A673 (cell line): ENCODE measurements at regions of chr2 and their contacts with region 1.

Region 1: DNA sequence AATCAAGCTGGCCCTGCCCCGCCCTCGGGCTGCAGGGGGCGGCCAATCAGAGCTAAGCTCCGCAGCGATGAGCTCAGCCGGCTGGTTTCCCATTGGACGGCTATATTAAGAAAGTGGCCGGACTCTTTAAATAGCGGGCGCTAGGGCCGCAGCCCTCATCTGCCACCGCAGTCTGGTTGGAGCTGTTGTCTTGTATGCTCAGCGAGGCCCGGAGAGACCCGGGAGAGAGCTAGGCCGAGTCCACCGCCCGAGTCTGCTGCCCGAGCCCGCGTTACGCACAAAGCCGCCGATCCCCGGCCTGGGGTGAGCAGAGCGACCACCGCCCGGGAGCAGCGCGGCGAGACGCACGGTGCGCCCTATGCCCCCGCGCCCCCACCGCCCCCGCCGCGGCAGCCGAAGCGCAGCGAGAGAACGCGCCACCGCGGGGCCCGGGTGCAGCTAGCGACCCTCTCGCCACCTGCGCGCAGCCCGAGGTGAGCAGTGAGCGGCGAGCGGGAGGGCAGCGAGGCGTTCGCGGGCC is at the start of gene RHOB:
- DNase-seq: peak; percentile 99
- H3K4me3 ChIP-seq: peak within 1 kb of the TSS; percentile 81
- H3K27ac ChIP-seq: peak within 1 kb of the TSS; percentile 94
- H3K4me1 ChIP-seq: peaks cover 15% of the 10 kb centered on the region
- H3K27me3 ChIP-seq: no peaks in the 10 kb centered on the region
- CTCF ChIP-seq: no peak
- total RNA-seq, gene RHOB: 24.1 and 31.5 TPM in 2 replicates

Region 2: DNA sequence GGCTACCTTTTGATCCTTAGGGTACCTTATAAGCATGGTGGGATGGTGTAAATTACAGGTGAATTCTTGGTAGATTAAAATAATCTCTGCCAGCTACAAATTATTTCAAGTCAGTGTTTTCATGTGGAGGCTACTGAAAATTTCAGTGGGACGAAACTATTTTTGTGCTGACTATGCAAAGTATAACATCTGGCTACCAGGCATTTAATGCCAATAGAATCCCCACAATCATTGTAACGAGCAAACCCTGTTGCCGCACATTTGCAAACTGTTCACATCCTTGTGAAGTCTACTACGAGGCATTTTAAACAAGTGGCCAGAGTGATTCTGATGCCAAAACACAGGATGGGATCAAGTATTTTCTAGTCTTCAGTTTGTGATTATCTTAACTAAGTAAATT is 173.9 kb before region 1 on chr2:
- CTCF ChIA-PET with region 1: no interaction called
- POLR2A ChIA-PET with region 1: no interaction called
- intact Hi-C with region 1: no loop called
- DNase-seq: no peak
- H3K4me3 ChIP-seq: no peak overlapping the region
- H3K27ac ChIP-seq: no peak overlapping the region
- H3K4me1 ChIP-seq: no peaks in the 10 kb centered on the region
- H3K27me3 ChIP-seq: no peaks in the 10 kb centered on the region
- CTCF ChIP-seq: no peak

Region 3: DNA sequence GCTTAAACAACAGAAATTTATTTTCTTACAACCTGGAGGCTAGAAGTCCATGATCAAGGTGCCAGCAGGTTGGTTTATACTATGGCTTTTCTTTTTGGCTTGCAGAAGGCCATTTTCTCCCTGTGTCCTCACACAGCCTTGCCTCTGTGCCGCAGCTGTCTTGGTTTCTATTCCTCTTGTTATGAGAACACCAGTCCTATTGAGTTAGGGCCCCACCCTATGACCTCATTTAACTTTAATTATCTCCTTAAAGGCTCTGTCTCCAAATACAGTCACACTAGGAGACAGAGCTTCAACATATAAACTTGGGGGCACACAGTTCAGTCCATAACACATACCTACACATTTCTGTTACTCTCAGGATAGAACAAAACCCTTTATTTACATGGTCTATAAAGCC is 17.4 kb before region 1 on chr2:
- CTCF ChIA-PET with region 1: no interaction called
- POLR2A ChIA-PET with region 1: no interaction called
- intact Hi-C with region 1: no loop called
- DNase-seq: no peak
- H3K4me3 ChIP-seq: no peak overlapping the region
- H3K27ac ChIP-seq: no peak overlapping the region
- H3K4me1 ChIP-seq: no peaks in the 10 kb centered on the region
- H3K27me3 ChIP-seq: no peaks in the 10 kb centered on the region
- CTCF ChIP-seq: no peak

Region 4: DNA sequence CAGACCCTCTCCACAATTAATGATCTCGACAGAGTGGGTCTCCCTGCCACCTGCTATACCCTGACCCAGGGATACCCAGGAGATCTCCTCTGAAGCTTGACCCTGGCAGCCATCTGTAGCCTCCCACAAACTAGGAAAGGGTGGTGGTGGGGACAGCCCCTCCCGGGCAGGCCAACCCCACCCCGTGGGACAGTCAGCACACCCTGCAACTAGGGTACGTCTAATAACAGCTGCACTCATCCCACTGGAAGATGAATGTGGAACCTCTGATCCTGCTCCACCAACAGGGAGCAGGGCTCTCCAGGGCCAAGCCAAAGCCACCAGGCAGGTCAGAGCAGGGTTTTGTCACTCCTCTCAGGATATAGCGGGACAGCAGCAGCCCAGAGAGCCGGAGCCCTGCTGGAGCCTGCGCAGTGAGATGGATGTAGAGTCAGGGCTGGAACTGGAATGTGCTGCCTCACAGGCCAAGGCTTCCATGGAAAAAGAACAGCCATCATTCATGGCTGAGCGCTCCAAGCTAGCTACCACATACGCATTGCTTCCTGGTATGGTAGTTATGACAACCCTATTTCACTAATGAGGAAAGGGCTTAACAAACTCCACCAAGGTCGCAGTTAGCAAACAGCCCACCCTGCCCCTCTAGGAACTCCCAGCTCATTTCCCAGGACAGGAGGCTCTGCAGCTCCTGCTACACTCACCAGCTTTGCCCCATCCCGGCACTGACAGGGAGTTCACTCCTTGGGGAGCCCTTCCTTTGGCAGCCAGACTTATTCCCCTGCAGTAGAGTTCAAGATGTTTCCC is 118.7 kb after region 1 on chr2:
- CTCF ChIA-PET with region 1: no interaction called
- POLR2A ChIA-PET with region 1: interaction called, 12 read pairs
- intact Hi-C with region 1: no loop called
- DNase-seq: no peak
- H3K4me3 ChIP-seq: no peak overlapping the region
- H3K27ac ChIP-seq: no peak overlapping the region
- H3K4me1 ChIP-seq: peaks cover 16% of the 10 kb centered on the region
- H3K27me3 ChIP-seq: no peaks in the 10 kb centered on the region
- CTCF ChIP-seq: no peak

Region 5: DNA sequence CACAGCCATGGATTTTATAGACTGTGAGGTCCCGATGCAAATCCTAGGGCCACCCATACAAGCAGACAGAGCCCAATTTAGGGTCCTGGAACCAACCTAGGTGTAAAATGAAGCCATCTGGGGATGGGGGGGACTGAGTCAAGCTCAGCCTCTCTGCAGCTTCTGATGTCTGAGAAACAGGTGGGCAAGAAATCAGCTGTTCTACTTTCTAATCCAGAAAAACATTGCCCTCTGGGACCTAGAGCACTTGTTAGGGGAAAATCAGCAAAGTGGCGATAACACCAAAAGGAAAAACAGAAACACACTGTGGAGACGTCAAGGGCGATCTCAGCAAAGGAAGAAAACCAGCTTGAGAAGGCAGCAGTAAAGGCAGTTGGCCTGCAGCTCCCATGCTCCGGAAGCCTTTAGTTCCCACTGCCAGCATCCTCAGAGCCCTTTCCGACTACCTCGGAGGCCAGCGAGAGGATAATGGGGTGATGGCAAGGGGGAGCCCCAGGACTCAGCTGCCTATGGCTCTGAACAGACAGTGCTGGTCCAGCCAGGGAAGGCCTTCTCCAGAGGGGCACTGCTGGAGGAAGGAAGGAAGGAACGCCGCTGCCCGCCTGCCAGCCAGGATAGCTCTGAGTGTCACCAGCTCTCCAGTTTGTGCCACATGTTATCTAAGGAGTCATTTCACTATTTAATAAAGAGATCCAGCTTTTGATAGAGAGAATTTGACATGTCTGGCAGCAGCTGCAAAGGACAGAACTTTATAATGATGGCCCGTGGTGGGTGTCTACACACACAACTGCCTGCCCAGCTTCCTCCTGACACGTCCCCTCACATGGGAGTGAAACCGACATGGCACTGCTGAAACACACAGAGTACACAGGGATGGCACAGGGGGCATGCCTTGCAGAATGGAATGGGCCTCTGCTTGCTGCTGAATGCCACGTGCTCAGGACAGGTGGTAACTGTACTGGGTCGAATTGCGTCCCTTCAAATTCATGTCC is 166.2 kb after region 1 on chr2:
- CTCF ChIA-PET with region 1: no interaction called
- POLR2A ChIA-PET with region 1: interaction called, 16 read pairs
- intact Hi-C with region 1: no loop called
- DNase-seq: no peak
- H3K4me3 ChIP-seq: no peak overlapping the region
- H3K27ac ChIP-seq: no peak overlapping the region
- H3K4me1 ChIP-seq: peaks cover 5% of the 10 kb centered on the region
- H3K27me3 ChIP-seq: no peaks in the 10 kb centered on the region
- CTCF ChIP-seq: no peak

Region 6: DNA sequence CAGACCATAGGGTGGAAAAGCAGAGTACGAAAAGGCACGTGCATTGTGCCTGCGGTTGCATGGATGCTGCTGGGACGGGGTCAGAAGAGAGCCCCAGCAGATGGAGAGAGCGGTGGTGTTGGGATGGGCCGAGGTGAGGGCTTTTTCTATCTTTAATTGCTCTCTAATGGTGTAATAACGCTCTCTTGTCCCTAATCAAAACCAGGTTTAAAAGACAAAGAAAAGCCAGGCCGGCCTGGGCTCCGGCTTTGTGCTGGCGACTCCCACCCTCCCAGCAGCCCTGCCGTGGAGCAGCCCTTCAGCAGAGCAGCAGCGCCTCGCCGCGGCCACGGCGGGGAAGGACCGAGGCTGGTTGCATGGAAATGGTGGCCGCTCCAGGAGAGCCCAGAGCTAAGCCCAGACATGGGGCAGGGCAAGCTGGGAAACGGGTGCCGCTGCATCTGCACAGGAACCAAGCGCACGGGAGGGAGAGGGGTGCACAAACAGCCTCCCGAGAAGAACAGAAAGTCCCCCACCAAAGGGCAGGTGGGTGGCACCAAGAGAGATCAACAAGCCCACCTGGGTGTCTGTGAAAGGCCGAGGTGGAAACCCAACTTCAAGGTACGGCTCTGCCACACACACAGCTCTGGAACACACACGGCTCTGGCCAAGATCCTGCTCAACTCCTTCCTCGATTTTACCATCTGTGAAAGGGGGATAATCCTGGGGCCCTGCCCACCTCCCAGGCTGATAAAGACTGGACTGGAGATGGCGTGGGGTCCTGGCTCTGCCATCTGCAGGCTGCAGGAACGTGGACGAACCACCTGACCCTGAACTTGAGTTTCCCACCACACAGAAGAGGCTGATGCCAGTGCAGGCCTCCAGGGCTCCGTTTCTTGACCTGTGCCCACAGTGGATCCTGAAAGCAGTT is 189.0 kb after region 1 on chr2:
- CTCF ChIA-PET with region 1: interaction called, 13 read pairs
- POLR2A ChIA-PET with region 1: interaction called, 5 read pairs
- intact Hi-C with region 1: loop called (anchors 1 kb)
- DNase-seq: peak; percentile 86
- H3K4me3 ChIP-seq: no peak overlapping the region
- H3K27ac ChIP-seq: no peak overlapping the region
- H3K4me1 ChIP-seq: no peaks in the 10 kb centered on the region
- H3K27me3 ChIP-seq: no peaks in the 10 kb centered on the region
- CTCF ChIP-seq: peak; percentile 98

Region 7: GRCh38 chr2:20642055-20642971 is 195.3 kb after region 1 on chr2:
- CTCF ChIA-PET with region 1: interaction called, 7 read pairs
- POLR2A ChIA-PET with region 1: interaction called, 7 read pairs
- intact Hi-C with region 1: loop called (anchors 2 kb)
- DNase-seq: peak; percentile 78
- H3K4me3 ChIP-seq: no peak overlapping the region
- H3K27ac ChIP-seq: no peak overlapping the region
- H3K4me1 ChIP-seq: no peaks in the 10 kb centered on the region
- H3K27me3 ChIP-seq: no peaks in the 10 kb centered on the region
- CTCF ChIP-seq: peak; percentile 95

Region 8: DNA sequence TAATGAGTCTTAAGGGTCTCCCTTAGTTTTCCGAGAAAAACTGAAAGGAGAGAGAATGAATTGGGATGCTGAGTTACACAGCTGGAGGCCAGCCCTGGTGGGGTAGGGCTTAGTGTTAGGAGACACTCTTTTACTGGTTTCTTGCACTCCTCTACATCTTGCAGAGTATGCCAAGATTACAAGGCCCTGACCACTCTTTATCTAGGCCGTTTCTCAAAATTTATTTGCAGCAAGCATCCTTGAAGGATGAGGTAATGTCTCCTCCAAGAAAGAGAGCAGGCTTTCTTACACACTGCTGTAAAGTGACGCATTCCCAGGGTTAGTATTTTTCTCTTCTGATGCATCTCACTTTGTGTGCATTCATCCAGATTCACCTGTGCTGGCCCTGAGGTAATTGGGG is 843.0 kb after region 1 on chr2:
- CTCF ChIA-PET with region 1: no interaction called
- POLR2A ChIA-PET with region 1: interaction called, 18 read pairs
- intact Hi-C with region 1: no loop called
- DNase-seq: no peak
- H3K4me3 ChIP-seq: no peak overlapping the region
- H3K27ac ChIP-seq: no peak overlapping the region
- H3K4me1 ChIP-seq: no peaks in the 10 kb centered on the region
- H3K27me3 ChIP-seq: peaks cover 18% of the 10 kb centered on the region
- CTCF ChIP-seq: no peak